ENCODE measurements at regions of chr2 and their contacts with region 1.

Region 1: GRCh38 chr2:64988420-64989125 is 626 bp upstream of the SLC1A4 start:
- DNase-seq: peak; percentile 40 to 79
- ATAC-seq: peak; percentile 48 to 64 (median 51)
- H3K4me3 ChIP-seq: peak overlapping the region; percentile 73
- H3K4me3 Mint-ChIP-seq: peak overlapping the region; percentile 84
- H3K27ac ChIP-seq: peak overlapping the region; percentile 78
- H3K27ac Mint-ChIP-seq: peak overlapping the region; percentile 37 to 63
- H3K4me1 ChIP-seq: peaks cover 23% of the 10 kb centered on the region
- H3K4me1 Mint-ChIP-seq: peaks cover 35 to 42% of the 10 kb centered on the region in 2 donors
- H3K27me3 ChIP-seq: no peaks in the 10 kb centered on the region
- H3K27me3 Mint-ChIP-seq: no peaks in the 10 kb centered on the region
- CTCF ChIP-seq: peak; percentile 28

Region 2: GRCh38 chr2:64945973-64946768 is 42.4 kb before region 1 on chr2:
- intact Hi-C with region 1: loop called (anchors 5 kb)
- DNase-seq: peak; percentile 70 to 71
- ATAC-seq: peak; percentile 95 to 99 (median 97)
- H3K4me3 ChIP-seq: no peak overlapping the region
- H3K4me3 Mint-ChIP-seq: peak overlapping the region; percentile 90
- H3K27ac ChIP-seq: peak overlapping the region; percentile 86
- H3K27ac Mint-ChIP-seq: peak overlapping the region; percentile 92 to 97
- H3K4me1 ChIP-seq: peaks cover 28% of the 10 kb centered on the region
- H3K4me1 Mint-ChIP-seq: peaks cover 33 to 49% of the 10 kb centered on the region in 2 donors
- H3K27me3 ChIP-seq: no peaks in the 10 kb centered on the region
- H3K27me3 Mint-ChIP-seq: peaks cover 0 to 6% of the 10 kb centered on the region in 2 donors
- CTCF ChIP-seq: no peak

Region 3: GRCh38 chr2:65040400-65041261 is 52.1 kb after region 1 on chr2:
- intact Hi-C with region 1: loop called (anchors 5 kb)
- DNase-seq: peak; percentile 67 to 90
- ATAC-seq: peak; percentile 94 to 100 (median 100)
- H3K4me3 ChIP-seq: no peak overlapping the region
- H3K4me3 Mint-ChIP-seq: no peak overlapping the region
- H3K27ac ChIP-seq: no peak overlapping the region
- H3K27ac Mint-ChIP-seq: no peak overlapping the region
- H3K4me1 ChIP-seq: peaks cover 4% of the 10 kb centered on the region
- H3K4me1 Mint-ChIP-seq: peaks cover 12 to 15% of the 10 kb centered on the region in 2 donors
- H3K27me3 ChIP-seq: no peaks in the 10 kb centered on the region
- H3K27me3 Mint-ChIP-seq: no peaks in the 10 kb centered on the region
- CTCF ChIP-seq: peak; percentile 95

Region 4: GRCh38 chr2:66532972-66533868 is 1544.6 kb after region 1 on chr2:
- intact Hi-C with region 1: no loop called
- DNase-seq: no peak
- ATAC-seq: no peak
- H3K4me3 ChIP-seq: no peak overlapping the region
- H3K4me3 Mint-ChIP-seq: no peak overlapping the region
- H3K27ac ChIP-seq: no peak overlapping the region
- H3K27ac Mint-ChIP-seq: no peak overlapping the region
- H3K4me1 ChIP-seq: no peaks in the 10 kb centered on the region
- H3K4me1 Mint-ChIP-seq: no peaks in the 10 kb centered on the region
- H3K27me3 ChIP-seq: no peaks in the 10 kb centered on the region
- H3K27me3 Mint-ChIP-seq: peaks cover 0 to 3% of the 10 kb centered on the region in 2 donors
- CTCF ChIP-seq: no peak